ENCODE measurements at regions of chr18 and their contacts with region 1.

Region 1: DNA sequence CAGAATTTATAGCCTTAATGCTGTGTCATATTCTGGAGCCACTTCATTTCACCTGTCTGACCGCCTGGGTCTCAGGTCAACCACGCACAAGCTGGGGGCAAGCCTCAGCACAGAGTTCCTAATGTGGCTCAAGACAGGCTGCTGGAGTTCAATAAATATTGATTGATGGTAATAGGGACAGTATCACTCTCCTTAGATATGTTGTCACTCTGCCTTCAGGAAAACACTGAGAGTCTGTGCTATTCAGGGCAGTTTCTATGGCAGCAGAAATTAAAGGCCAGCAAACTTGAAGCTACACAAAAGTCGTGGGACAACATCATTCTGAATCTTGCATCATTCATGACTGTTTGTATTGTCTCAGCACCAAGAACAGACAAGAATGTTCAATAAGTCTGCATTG is 696.1 kb downstream of the METTL4 start:
- DNase-seq: no peak
- H3K4me3 ChIP-seq: no peak overlapping the region
- H3K27ac ChIP-seq: no peak overlapping the region
- H3K4me1 ChIP-seq: no peaks in the 10 kb centered on the region
- H3K27me3 ChIP-seq: peaks cover 4% of the 10 kb centered on the region
- CTCF ChIP-seq: no peak

Region 2: GRCh38 chr18:1425679-1426078 is 449.5 kb before region 1 on chr18:
- CTCF ChIA-PET with region 1: no interaction called
- dilution Hi-C with region 1: no loop called
- in situ Hi-C with region 1: no loop called
- intact Hi-C with region 1: no loop called
- DNase-seq: no peak
- H3K4me3 ChIP-seq: no peak overlapping the region
- H3K27ac ChIP-seq: no peak overlapping the region
- H3K4me1 ChIP-seq: no peaks in the 10 kb centered on the region
- H3K27me3 ChIP-seq: no peaks in the 10 kb centered on the region
- CTCF ChIP-seq: no peak

Region 3: GRCh38 chr18:1483385-1483784 is 391.8 kb before region 1 on chr18:
- CTCF ChIA-PET with region 1: no interaction called
- dilution Hi-C with region 1: no loop called
- in situ Hi-C with region 1: no loop called
- intact Hi-C with region 1: no loop called
- DNase-seq: no peak
- H3K4me3 ChIP-seq: no peak overlapping the region
- H3K27ac ChIP-seq: no peak overlapping the region
- H3K4me1 ChIP-seq: no peaks in the 10 kb centered on the region
- H3K27me3 ChIP-seq: no peaks in the 10 kb centered on the region
- CTCF ChIP-seq: no peak

Region 4: GRCh38 chr18:1806880-1807615 is 68.2 kb before region 1 on chr18:
- CTCF ChIA-PET with region 1: no interaction called
- dilution Hi-C with region 1: no loop called
- in situ Hi-C with region 1: no loop called
- intact Hi-C with region 1: loop called (anchors 5 kb)
- DNase-seq: no peak
- H3K4me3 ChIP-seq: no peak overlapping the region
- H3K27ac ChIP-seq: no peak overlapping the region
- H3K4me1 ChIP-seq: no peaks in the 10 kb centered on the region
- H3K27me3 ChIP-seq: no peaks in the 10 kb centered on the region
- CTCF ChIP-seq: no peak

Region 5: GRCh38 chr18:3498698-3499471 is 1623.7 kb after region 1 on chr18:
- CTCF ChIA-PET with region 1: no interaction called
- dilution Hi-C with region 1: no loop called
- in situ Hi-C with region 1: no loop called
- intact Hi-C with region 1: no loop called
- DNase-seq: no peak
- H3K4me3 ChIP-seq: peak overlapping the region; percentile 33 to 39 (median 35)
- H3K27ac ChIP-seq: no peak overlapping the region
- H3K4me1 ChIP-seq: no peaks in the 10 kb centered on the region
- H3K27me3 ChIP-seq: peaks cover 2% of the 10 kb centered on the region
- CTCF ChIP-seq: no peak

Measured in mammary epithelial cell (primary cell).